Heart right ventricle (tissue), 16 donors: ENCODE measurements at regions of chr7 and their contacts with region 1.

Region 1: GRCh38 chr7:22726345-22727185 is 435 bp upstream of the IL6 start:
- DNase-seq: peak; percentile 23 to 42
- ATAC-seq: peak; percentile 49 to 75 (median 63)
- H3K4me3 ChIP-seq: peak overlapping the region in 9 of 10 donors; percentile 32 to 53 (median 46)
- H3K27ac ChIP-seq: peak overlapping the region; percentile 56 to 86 (median 75)
- H3K4me1 ChIP-seq: peaks cover 4 to 66% (median 44%) of the 10 kb centered on the region in 9 donors
- H3K27me3 ChIP-seq: no peaks in the 10 kb centered on the region
- CTCF ChIP-seq: peak; percentile 27 to 66 (median 55)

Region 2: GRCh38 chr7:22577396-22578001 is 149.1 kb before region 1 on chr7:
- intact Hi-C with region 1: loop called in 2 of 10 experiments (anchors 5 kb)
- DNase-seq: peak in 1 of 2 donors; percentile 56
- ATAC-seq: peak; percentile 83 to 93 (median 89)
- H3K4me3 ChIP-seq: no peak overlapping the region
- H3K27ac ChIP-seq: peak overlapping the region in 9 of 10 donors; percentile 56 to 85 (median 72)
- H3K4me1 ChIP-seq: peaks cover 0 to 43% (median 17%) of the 10 kb centered on the region in 9 donors
- H3K27me3 ChIP-seq: no peaks in the 10 kb centered on the region
- CTCF ChIP-seq: peak in 2 of 9 donors; percentile 10 to 19

Region 3: GRCh38 chr7:22651534-22652243 is 74.9 kb before region 1 on chr7:
- intact Hi-C with region 1: loop called in 1 of 10 experiments (anchors 10 kb)
- DNase-seq: no peak
- ATAC-seq: peak in 5 of 8 donors; percentile 14 to 73 (median 54)
- H3K4me3 ChIP-seq: no peak overlapping the region
- H3K27ac ChIP-seq: peak overlapping the region in 3 of 10 donors; percentile 18 to 54 (median 28)
- H3K4me1 ChIP-seq: peaks cover 0 to 30% (median 19%) of the 10 kb centered on the region in 9 donors
- H3K27me3 ChIP-seq: no peaks in the 10 kb centered on the region
- CTCF ChIP-seq: no peak

Region 4: GRCh38 chr7:23055582-23056178 is 329.1 kb after region 1 on chr7:
- intact Hi-C with region 1: loop called in 5 of 10 experiments (anchors 5 to 10 kb)
- DNase-seq: peak in 1 of 2 donors; percentile 48
- ATAC-seq: peak in 7 of 8 donors; percentile 51 to 84 (median 64)
- H3K4me3 ChIP-seq: no peak overlapping the region
- H3K27ac ChIP-seq: no peak overlapping the region
- H3K4me1 ChIP-seq: peaks cover 0 to 9% (median 0%) of the 10 kb centered on the region in 9 donors
- H3K27me3 ChIP-seq: no peaks in the 10 kb centered on the region
- CTCF ChIP-seq: peak; percentile 81 to 97 (median 94)